PC-3 (cell line): ENCODE measurements at regions of chr15 and their contacts with region 1.

Region 1: GRCh38 chr15:43510200-43511011 is 7.0 kb upstream of the MAP1A start:
- DNase-seq: peak; percentile 99
- ATAC-seq: peak; percentile 94
- H3K4me3 ChIP-seq: peak overlapping the region; percentile 77
- H3K27ac ChIP-seq: peak overlapping the region; percentile 30
- H3K4me1 ChIP-seq: peaks cover 9% of the 10 kb centered on the region
- H3K27me3 ChIP-seq: no peaks in the 10 kb centered on the region
- CTCF ChIP-seq: no peak

Region 2: GRCh38 chr15:42619656-42620371 is 890.6 kb before region 1 on chr15:
- CTCF ChIA-PET with region 1: no interaction called
- POLR2A ChIA-PET with region 1: no interaction called
- intact Hi-C with region 1: no loop called
- DNase-seq: no peak
- ATAC-seq: no peak
- H3K4me3 ChIP-seq: no peak overlapping the region
- H3K27ac ChIP-seq: no peak overlapping the region
- H3K4me1 ChIP-seq: no peaks in the 10 kb centered on the region
- H3K27me3 ChIP-seq: no peaks in the 10 kb centered on the region
- CTCF ChIP-seq: no peak

Region 3: GRCh38 chr15:43316016-43316970 is 194.1 kb before region 1 on chr15:
- CTCF ChIA-PET with region 1: no interaction called
- POLR2A ChIA-PET with region 1: no interaction called
- intact Hi-C with region 1: no loop called
- DNase-seq: no peak
- ATAC-seq: no peak
- H3K4me3 ChIP-seq: no peak overlapping the region
- H3K27ac ChIP-seq: no peak overlapping the region
- H3K4me1 ChIP-seq: no peaks in the 10 kb centered on the region
- H3K27me3 ChIP-seq: peaks cover 6% of the 10 kb centered on the region; the same call in 1 of the 2 replicates
- CTCF ChIP-seq: no peak

Region 4: GRCh38 chr15:43440721-43441281 is 69.6 kb before region 1 on chr15:
- CTCF ChIA-PET with region 1: interaction called, 28 read pairs
- POLR2A ChIA-PET with region 1: interaction called, 3 read pairs
- intact Hi-C with region 1: loop called (anchors 1 kb)
- DNase-seq: peak; percentile 94
- ATAC-seq: peak; percentile 99
- H3K4me3 ChIP-seq: no peak overlapping the region
- H3K27ac ChIP-seq: peak overlapping the region; percentile 74
- H3K4me1 ChIP-seq: peaks cover 10% of the 10 kb centered on the region
- H3K27me3 ChIP-seq: no peaks in the 10 kb centered on the region
- CTCF ChIP-seq: peak; percentile 74

Region 5: GRCh38 chr15:43483306-43484128 is 26.9 kb before region 1 on chr15:
- CTCF ChIA-PET with region 1: interaction called, 5 read pairs
- POLR2A ChIA-PET with region 1: no interaction called
- intact Hi-C with region 1: loop called (anchors 1 kb)
- DNase-seq: peak; percentile 41
- ATAC-seq: no peak
- H3K4me3 ChIP-seq: no peak overlapping the region
- H3K27ac ChIP-seq: no peak overlapping the region
- H3K4me1 ChIP-seq: no peaks in the 10 kb centered on the region
- H3K27me3 ChIP-seq: no peaks in the 10 kb centered on the region
- CTCF ChIP-seq: peak; percentile 64

Region 6: DNA sequence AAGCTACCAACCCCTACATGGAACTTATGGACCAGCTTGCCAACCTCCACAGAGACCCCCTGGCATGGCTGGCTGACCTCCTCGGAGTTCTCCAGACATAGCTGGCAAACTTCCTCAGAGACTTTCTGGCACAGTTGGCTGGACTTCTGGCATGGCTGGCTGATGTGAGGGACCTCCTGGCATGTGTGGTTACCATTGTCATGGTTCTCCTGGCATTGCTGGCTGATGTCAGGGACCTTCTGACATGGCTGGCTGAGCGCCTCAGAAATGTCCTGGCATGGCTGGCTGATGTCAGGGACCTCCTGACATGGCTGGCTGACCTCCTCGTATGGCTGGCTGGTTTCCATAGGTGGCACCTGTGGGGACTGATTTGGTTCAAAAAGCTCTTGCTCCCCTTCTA is 24.5 kb after region 1 on chr15:
- CTCF ChIA-PET with region 1: no interaction called
- POLR2A ChIA-PET with region 1: no interaction called
- intact Hi-C with region 1: no loop called
- DNase-seq: no peak
- ATAC-seq: no peak
- H3K4me3 ChIP-seq: no peak overlapping the region
- H3K27ac ChIP-seq: no peak overlapping the region
- H3K4me1 ChIP-seq: no peaks in the 10 kb centered on the region
- H3K27me3 ChIP-seq: no peaks in the 10 kb centered on the region
- CTCF ChIP-seq: no peak

Region 7: DNA sequence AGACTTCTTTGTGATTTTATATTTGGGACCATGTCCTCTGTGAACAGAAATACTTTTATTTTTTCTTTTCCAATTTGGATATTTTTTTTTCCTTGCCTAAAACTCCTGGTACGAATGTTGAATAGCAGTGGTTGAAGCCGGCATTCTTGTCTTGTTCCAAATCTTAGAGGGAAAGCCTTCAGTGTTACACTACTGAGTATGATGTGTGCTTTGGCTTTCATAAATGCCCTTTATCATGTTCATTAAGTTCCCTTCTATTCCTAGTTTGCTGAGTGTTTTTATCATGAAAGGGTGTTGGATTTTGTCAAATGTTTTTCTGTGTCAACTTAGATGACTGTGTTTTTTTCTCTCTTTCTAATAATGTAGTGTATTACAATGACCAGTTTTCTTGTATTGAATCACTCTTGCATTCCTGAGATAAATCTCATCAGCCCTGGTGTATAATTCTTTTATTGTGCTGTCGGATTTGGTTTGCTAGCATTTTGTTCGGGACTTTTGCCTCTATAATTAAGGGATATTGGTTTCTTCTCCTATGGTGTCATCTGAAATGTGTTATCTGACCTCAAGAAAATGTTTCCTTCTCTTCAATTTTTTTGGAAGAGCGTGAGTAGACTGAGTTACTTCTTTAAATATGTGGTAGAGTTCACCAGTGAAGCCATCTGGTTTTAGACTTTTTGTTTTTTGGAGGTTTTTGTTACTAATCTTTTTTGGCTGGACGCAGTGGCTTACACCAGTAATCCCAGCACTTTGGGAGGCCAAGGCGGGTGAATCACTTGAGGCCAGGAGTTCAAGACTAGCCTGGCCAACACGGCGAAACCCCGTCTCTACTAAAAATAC is 40.3 kb after region 1 on chr15:
- CTCF ChIA-PET with region 1: no interaction called
- POLR2A ChIA-PET with region 1: interaction called, 10 read pairs
- intact Hi-C with region 1: no loop called
- DNase-seq: no peak
- ATAC-seq: no peak
- H3K4me3 ChIP-seq: no peak overlapping the region
- H3K27ac ChIP-seq: no peak overlapping the region
- H3K4me1 ChIP-seq: no peaks in the 10 kb centered on the region
- H3K27me3 ChIP-seq: no peaks in the 10 kb centered on the region
- CTCF ChIP-seq: no peak

Region 8: DNA sequence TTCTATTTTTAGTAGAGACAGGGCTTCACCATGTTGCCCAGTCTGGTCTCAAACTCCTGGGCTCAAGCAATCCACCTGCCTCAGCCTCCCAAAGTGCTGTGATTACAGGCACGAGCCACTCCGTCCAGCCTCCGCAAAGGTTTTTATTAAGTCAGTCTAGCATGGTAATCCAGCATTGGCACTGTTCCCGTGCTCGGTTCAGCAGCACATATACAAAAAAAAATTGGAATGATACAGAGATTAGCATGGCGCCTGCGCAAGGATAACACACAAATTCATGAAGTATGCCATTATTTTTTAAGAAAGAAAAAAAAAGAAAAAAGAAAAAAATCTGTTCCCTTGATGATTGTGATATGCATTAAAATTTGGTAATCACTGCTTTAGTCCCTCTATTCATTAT is 191.8 kb after region 1 on chr15:
- CTCF ChIA-PET with region 1: no interaction called
- POLR2A ChIA-PET with region 1: no interaction called
- intact Hi-C with region 1: no loop called
- DNase-seq: no peak
- ATAC-seq: no peak
- H3K4me3 ChIP-seq: no peak overlapping the region
- H3K27ac ChIP-seq: no peak overlapping the region
- H3K4me1 ChIP-seq: no peaks in the 10 kb centered on the region
- H3K27me3 ChIP-seq: peaks cover 10% of the 10 kb centered on the region
- CTCF ChIP-seq: no peak